Caco-2 (cell line): ENCODE measurements at regions of chr7 and their contacts with region 1.

Region 1: GRCh38 chr7:137454246-137454724 is 110.8 kb upstream of the PTN start:
- DNase-seq: peak in 1 of 2 experiments; percentile 43
- H3K4me3 ChIP-seq: no peak overlapping the region
- H3K4me3 Mint-ChIP-seq: no peak overlapping the region
- H3K27ac Mint-ChIP-seq: no peak overlapping the region
- H3K4me1 ChIP-seq: no peaks in the 10 kb centered on the region
- H3K4me1 Mint-ChIP-seq: no peaks in the 10 kb centered on the region
- H3K27me3 ChIP-seq: no peaks in the 10 kb centered on the region
- H3K27me3 Mint-ChIP-seq: peaks cover 10% of the 10 kb centered on the region
- CTCF ChIP-seq: peak; percentile 54 to 61

Region 2: GRCh38 chr7:137592232-137592896 is 138.1 kb after region 1 on chr7:
- CTCF ChIA-PET with region 1: no interaction called
- POLR2A ChIA-PET with region 1: no interaction called
- intact Hi-C with region 1: loop called (anchors 1 kb)
- DNase-seq: peak; percentile 59 to 68
- H3K4me3 ChIP-seq: no peak overlapping the region
- H3K4me3 Mint-ChIP-seq: no peak overlapping the region
- H3K27ac Mint-ChIP-seq: no peak overlapping the region
- H3K4me1 ChIP-seq: no peaks in the 10 kb centered on the region
- H3K4me1 Mint-ChIP-seq: no peaks in the 10 kb centered on the region
- H3K27me3 ChIP-seq: no peaks in the 10 kb centered on the region
- H3K27me3 Mint-ChIP-seq: peaks cover 10% of the 10 kb centered on the region
- CTCF ChIP-seq: peak; percentile 72 to 80